ENCODE measurements at regions of chr15 and their contacts with region 1.

Region 1: GRCh38 chr15:98779463-98780071 is 131.2 kb downstream of the IGF1R start:
- DNase-seq: peak; percentile 68 to 92 (median 77)
- ATAC-seq: peak; percentile 82 to 92 (median 85)
- H3K4me3 ChIP-seq: no peak overlapping the region
- H3K27ac ChIP-seq: peak overlapping the region in 3 of 4 donors; percentile 10 to 61 (median 19)
- H3K4me1 ChIP-seq: peaks cover 38 to 55% (median 52%) of the 10 kb centered on the region in 3 donors
- H3K27me3 ChIP-seq: no peaks in the 10 kb centered on the region
- CTCF ChIP-seq: peak; percentile 80 to 90 (median 83)

Region 2: GRCh38 chr15:98503970-98504369 is 275.6 kb before region 1 on chr15:
- intact Hi-C with region 1: no loop called
- DNase-seq: no peak
- ATAC-seq: peak in 1 of 4 donors; percentile 25
- H3K4me3 ChIP-seq: no peak overlapping the region
- H3K27ac ChIP-seq: no peak overlapping the region
- H3K4me1 ChIP-seq: no peaks in the 10 kb centered on the region
- H3K27me3 ChIP-seq: no peaks in the 10 kb centered on the region
- CTCF ChIP-seq: no peak

Region 3: GRCh38 chr15:98668566-98669308 is 110.8 kb before region 1 on chr15:
- intact Hi-C with region 1: loop called in 1 of 3 experiments (anchors 10 kb)
- DNase-seq: no peak
- ATAC-seq: peak in 3 of 4 donors; percentile 25 to 66 (median 35)
- H3K4me3 ChIP-seq: no peak overlapping the region
- H3K27ac ChIP-seq: peak overlapping the region in 2 of 4 donors; percentile 9 to 53
- H3K4me1 ChIP-seq: peaks cover 30 to 31% (median 31%) of the 10 kb centered on the region in 3 donors
- H3K27me3 ChIP-seq: no peaks in the 10 kb centered on the region
- CTCF ChIP-seq: no peak

Region 4: DNA sequence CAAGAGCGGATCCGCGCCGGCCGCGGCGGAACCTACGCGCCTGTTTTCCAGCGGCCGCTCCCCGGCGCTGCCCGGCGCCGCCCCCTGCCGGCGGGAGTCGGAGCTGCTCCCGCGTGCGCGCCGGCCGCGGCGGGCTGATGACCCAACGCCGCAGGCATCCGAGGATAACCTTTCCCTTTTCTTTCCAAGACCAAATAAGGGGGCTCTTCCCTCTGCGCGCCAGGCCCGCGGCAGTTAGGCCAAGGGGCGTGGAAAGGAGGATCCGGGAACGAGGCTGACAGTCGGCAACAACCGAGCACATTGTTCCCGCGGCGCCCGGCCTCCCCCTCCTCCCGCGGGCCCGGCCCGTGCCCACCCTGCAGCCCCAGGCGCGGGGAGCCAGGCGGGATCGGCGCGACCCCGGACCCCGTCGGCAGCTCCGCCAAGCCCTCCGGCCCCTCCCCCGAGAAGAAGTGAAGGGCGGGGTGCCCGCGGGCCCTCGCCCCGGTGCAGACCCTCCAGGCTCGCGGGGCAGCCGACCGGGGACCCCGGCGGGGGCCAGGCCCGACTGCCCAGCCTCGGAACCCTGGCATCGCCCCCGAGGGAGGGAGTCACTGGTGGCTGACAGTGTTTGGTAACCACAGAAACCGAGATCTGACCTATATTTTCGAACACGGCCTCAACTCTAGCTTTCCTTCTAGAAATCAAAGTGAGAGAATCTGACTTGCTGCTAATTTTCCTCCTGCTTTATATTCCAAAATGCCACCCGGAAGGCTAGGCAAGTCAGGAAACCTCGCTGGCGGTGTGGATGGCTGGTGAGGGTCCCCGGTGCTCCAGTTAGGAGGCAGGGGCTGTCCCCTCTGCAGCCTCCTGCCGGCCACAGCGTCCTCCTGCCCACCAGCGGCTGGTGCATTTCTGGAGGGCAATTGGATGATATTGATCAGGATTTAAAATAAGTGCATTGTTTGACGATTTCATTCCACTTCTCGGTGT is 279.7 kb after region 1 on chr15:
- intact Hi-C with region 1: loop called in 1 of 3 experiments (anchors 10 kb)
- DNase-seq: peak; percentile 38 to 89 (median 70)
- ATAC-seq: peak; percentile 92 to 96 (median 96)
- H3K4me3 ChIP-seq: peak overlapping the region; percentile 10 to 60 (median 30)
- H3K27ac ChIP-seq: no peak overlapping the region
- H3K4me1 ChIP-seq: no peaks in the 10 kb centered on the region
- H3K27me3 ChIP-seq: no peaks in the 10 kb centered on the region
- CTCF ChIP-seq: peak; percentile 71 to 81 (median 76)

Measured in pancreas (tissue), 10 donors.